Activated B cell treated with CpG ODN at 0.5 μM for 24 hours (primary cell): ENCODE measurements at regions of chr7 and their contacts with region 1.

Region 1: GRCh38 chr7:30396389-30396788 is 82.2 kb downstream of the NOD1 start:
- DNase-seq: no peak
- ATAC-seq: peak; percentile 25
- H3K4me3 Mint-ChIP-seq: no peak overlapping the region
- H3K27ac Mint-ChIP-seq: no peak overlapping the region
- H3K4me1 Mint-ChIP-seq: peaks cover 4% of the 10 kb centered on the region
- H3K27me3 Mint-ChIP-seq: no peaks in the 10 kb centered on the region
- CTCF ChIP-seq: no peak

Region 2: DNA sequence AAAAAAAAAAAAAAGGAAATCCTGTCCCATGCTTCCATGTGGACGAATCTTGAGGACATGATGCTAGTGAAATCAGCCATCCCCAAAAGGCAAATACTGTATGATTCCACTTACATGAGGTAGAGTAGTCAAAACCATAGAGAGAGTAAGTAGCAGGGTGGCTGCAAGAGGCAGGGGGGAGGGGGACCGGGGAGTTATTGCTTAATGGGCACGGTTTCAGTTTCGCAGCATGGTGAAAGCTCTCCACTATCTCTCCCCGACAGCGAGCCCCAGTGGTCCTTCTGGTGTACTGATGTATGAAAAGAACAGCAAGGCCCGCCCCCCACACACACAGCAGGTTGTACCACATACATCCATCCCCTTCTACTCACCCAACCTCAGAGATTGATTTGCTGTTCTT is 49.4 kb after region 1 on chr7:
- CTCF ChIA-PET with region 1: interaction called, 14 read pairs
- POLR2A ChIA-PET with region 1: no interaction called
- intact Hi-C with region 1: loop called (anchors 5 kb)
- DNase-seq: peak; percentile 66
- ATAC-seq: peak; percentile 100
- H3K4me3 Mint-ChIP-seq: no peak overlapping the region
- H3K27ac Mint-ChIP-seq: peak overlapping the region; percentile 64
- H3K4me1 Mint-ChIP-seq: peaks cover 6% of the 10 kb centered on the region
- H3K27me3 Mint-ChIP-seq: no peaks in the 10 kb centered on the region
- CTCF ChIP-seq: no peak